ENCODE measurements at regions of chr11 and their contacts with region 1.

Region 1: GRCh38 chr11:60477035-60477445 is 15.5 kb upstream of the MS4A12 start:
- DNase-seq: peak; percentile 92
- ATAC-seq: peak; percentile 95
- H3K4me3 ChIP-seq: peak overlapping the region in 1 of 5 experiments; percentile 16
- H3K4me3 Mint-ChIP-seq: peak overlapping the region; percentile 69
- H3K27ac ChIP-seq: peak overlapping the region; percentile 78 to 88
- H3K27ac Mint-ChIP-seq: peak overlapping the region; percentile 78
- H3K4me1 ChIP-seq: peaks cover 43 to 55% of the 10 kb centered on the region in 2 donors
- H3K4me1 Mint-ChIP-seq: peaks cover 66% of the 10 kb centered on the region
- H3K27me3 ChIP-seq: no peaks in the 10 kb centered on the region
- H3K27me3 Mint-ChIP-seq: no peaks in the 10 kb centered on the region
- CTCF ChIP-seq: no peak

Region 2: GRCh38 chr11:59802639-59803176 is 674.3 kb before region 1 on chr11:
- CTCF ChIA-PET with region 1: no interaction called
- POLR2A ChIA-PET with region 1: no interaction called
- intact Hi-C with region 1: loop called (anchors 10 kb)
- DNase-seq: peak; percentile 79
- ATAC-seq: peak; percentile 64
- H3K4me3 ChIP-seq: no peak overlapping the region
- H3K4me3 Mint-ChIP-seq: no peak overlapping the region
- H3K27ac ChIP-seq: no peak overlapping the region
- H3K27ac Mint-ChIP-seq: no peak overlapping the region
- H3K4me1 ChIP-seq: no peaks in the 10 kb centered on the region
- H3K4me1 Mint-ChIP-seq: no peaks in the 10 kb centered on the region
- H3K27me3 ChIP-seq: no peaks in the 10 kb centered on the region
- H3K27me3 Mint-ChIP-seq: no peaks in the 10 kb centered on the region
- CTCF ChIP-seq: peak; percentile 80

Region 3: GRCh38 chr11:60570970-60571369 is 93.9 kb after region 1 on chr11:
- CTCF ChIA-PET with region 1: no interaction called
- POLR2A ChIA-PET with region 1: interaction called, 8 read pairs
- intact Hi-C with region 1: loop called (anchors 1 kb)
- DNase-seq: peak; percentile 72
- ATAC-seq: peak; percentile 82
- H3K4me3 ChIP-seq: no peak overlapping the region
- H3K4me3 Mint-ChIP-seq: no peak overlapping the region
- H3K27ac ChIP-seq: no peak overlapping the region
- H3K27ac Mint-ChIP-seq: peak overlapping the region; percentile 16
- H3K4me1 ChIP-seq: peaks cover 8 to 17% of the 10 kb centered on the region in 2 donors
- H3K4me1 Mint-ChIP-seq: peaks cover 19% of the 10 kb centered on the region
- H3K27me3 ChIP-seq: no peaks in the 10 kb centered on the region
- H3K27me3 Mint-ChIP-seq: no peaks in the 10 kb centered on the region
- CTCF ChIP-seq: no peak

Measured in B cell (primary cell).